Activated CD8-positive, alpha-beta T cell treated with anti-CD3 and anti-CD28 coated beads for 36 hours (primary cell): ENCODE measurements at regions of chr5 and their contacts with region 1.

Region 1: DNA sequence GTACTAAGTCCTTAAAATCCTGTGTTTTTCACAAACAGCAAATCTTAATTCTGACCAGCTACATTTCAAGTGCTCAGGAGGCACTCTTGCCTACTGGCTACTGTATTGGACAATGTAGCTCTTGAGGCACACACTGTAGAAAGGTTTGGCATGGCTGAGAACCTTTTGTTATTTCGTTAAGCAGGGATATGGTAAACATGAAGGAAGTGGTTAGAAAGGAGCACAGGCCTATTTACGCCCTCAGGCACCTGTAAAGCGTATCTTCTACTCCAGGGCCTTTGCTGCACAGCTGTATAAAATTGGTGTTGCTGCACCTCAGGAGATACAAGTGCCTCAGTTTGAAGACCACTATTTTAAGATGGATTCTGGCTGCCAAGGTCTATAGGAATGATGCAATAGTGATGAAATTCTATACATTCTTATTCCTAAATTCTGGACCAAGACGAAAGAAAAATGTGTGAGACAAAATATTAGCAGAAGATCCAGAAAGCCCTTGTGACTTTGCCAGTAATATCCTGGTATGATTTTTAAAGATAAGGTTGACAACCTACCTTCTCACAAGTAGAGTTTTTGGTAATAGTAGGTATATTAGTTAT is 9.3 kb upstream of the OTULIN start:
- DNase-seq: no peak
- ATAC-seq: peak; percentile 17
- H3K4me3 Mint-ChIP-seq: no peak overlapping the region
- H3K27ac Mint-ChIP-seq: no peak overlapping the region
- H3K4me1 Mint-ChIP-seq: peaks cover 35% of the 10 kb centered on the region
- H3K27me3 Mint-ChIP-seq: peaks cover 4% of the 10 kb centered on the region
- CTCF ChIP-seq: no peak

Region 2: GRCh38 chr5:14351845-14352712 is 303.2 kb before region 1 on chr5:
- CTCF ChIA-PET with region 1: interaction called, 48 read pairs
- POLR2A ChIA-PET with region 1: no interaction called
- intact Hi-C with region 1: no loop called
- DNase-seq: peak; percentile 71
- ATAC-seq: peak; percentile 99
- H3K4me3 Mint-ChIP-seq: no peak overlapping the region
- H3K27ac Mint-ChIP-seq: no peak overlapping the region
- H3K4me1 Mint-ChIP-seq: no peaks in the 10 kb centered on the region
- H3K27me3 Mint-ChIP-seq: peaks cover 1% of the 10 kb centered on the region
- CTCF ChIP-seq: peak; percentile 84

Region 3: GRCh38 chr5:14560091-14560595 is 95.1 kb before region 1 on chr5:
- CTCF ChIA-PET with region 1: no interaction called
- POLR2A ChIA-PET with region 1: no interaction called
- intact Hi-C with region 1: no loop called
- DNase-seq: peak; percentile 13
- ATAC-seq: peak; percentile 66
- H3K4me3 Mint-ChIP-seq: no peak overlapping the region
- H3K27ac Mint-ChIP-seq: peak overlapping the region; percentile 30
- H3K4me1 Mint-ChIP-seq: peaks cover 21% of the 10 kb centered on the region
- H3K27me3 Mint-ChIP-seq: no peaks in the 10 kb centered on the region
- CTCF ChIP-seq: no peak

Region 4: DNA sequence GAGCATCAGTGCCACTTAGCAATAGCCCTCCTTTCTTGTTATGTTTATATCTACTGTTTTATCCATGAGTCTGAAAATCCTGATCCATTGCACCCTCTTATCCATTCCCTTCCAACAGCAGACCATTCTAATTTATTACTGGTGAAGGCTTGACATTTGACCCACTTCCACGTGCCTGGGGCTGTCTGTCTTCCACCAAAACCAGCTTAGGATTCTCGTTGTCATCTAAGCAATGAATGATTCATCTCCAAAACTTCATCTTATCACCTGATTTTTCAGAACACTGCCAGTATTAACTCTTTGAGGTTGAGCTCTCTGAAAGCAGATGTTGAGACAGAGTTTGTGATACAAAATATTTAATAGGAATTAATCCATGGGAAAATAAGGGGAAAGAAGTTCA is 566.9 kb after region 1 on chr5:
- CTCF ChIA-PET with region 1: no interaction called
- POLR2A ChIA-PET with region 1: no interaction called
- intact Hi-C with region 1: no loop called
- DNase-seq: no peak
- ATAC-seq: no peak
- H3K4me3 Mint-ChIP-seq: no peak overlapping the region
- H3K27ac Mint-ChIP-seq: no peak overlapping the region
- H3K4me1 Mint-ChIP-seq: no peaks in the 10 kb centered on the region
- H3K27me3 Mint-ChIP-seq: no peaks in the 10 kb centered on the region
- CTCF ChIP-seq: no peak